ENCODE measurements at regions of chr17 and their contacts with region 1.

Region 1: GRCh38 chr17:67942810-67943209 is 53.5 kb downstream of the C17orf58 start:
- DNase-seq: peak; percentile 25 to 32
- ATAC-seq: peak; percentile 64 to 82; a peak in 5 of 6 replicates
- H3K4me3 ChIP-seq: no peak overlapping the region
- H3K27ac ChIP-seq: no peak overlapping the region
- H3K4me1 ChIP-seq: no peaks in the 10 kb centered on the region
- CTCF ChIP-seq: peak; percentile 49
- EP300 ChIP-seq: no peak
- POLR2A ChIP-seq: no peak
- RAD21 ChIP-seq: peak in 1 of 2 experiments; percentile 11; a peak in 1 of 5 replicates

Region 2: DNA sequence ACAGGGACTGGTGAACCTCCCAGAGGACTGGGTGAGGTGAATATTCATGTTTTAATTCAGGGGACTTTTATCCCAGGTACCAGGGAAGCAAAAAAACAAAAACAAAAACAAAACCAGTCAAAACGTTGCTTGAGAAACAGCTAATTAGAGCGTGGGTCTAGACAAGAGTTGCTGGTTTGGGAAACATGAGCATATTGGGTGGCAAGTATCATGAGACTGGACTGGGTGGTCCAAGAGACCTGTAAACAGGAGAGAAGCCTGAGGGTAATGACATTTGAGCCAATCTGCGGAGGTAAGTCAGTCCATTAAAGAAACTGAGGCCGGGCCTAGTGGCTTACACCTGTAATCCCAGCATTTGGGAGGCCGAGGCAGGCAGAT is 129.0 kb before region 1 on chr17:
- CTCF ChIA-PET with region 1: no interaction called
- POLR2A ChIA-PET with region 1: no interaction called
- DNase-seq: no peak
- ATAC-seq: no peak
- H3K4me3 ChIP-seq: no peak overlapping the region
- H3K27ac ChIP-seq: no peak overlapping the region; a peak in 1 of 6 replicates
- H3K4me1 ChIP-seq: no peaks in the 10 kb centered on the region
- CTCF ChIP-seq: no peak
- EP300 ChIP-seq: no peak
- POLR2A ChIP-seq: no peak
- RAD21 ChIP-seq: no peak

Region 3: GRCh38 chr17:67931233-67931632 is 11.6 kb before region 1 on chr17:
- CTCF ChIA-PET with region 1: interaction called, 23 read pairs
- POLR2A ChIA-PET with region 1: no interaction called
- DNase-seq: no peak
- ATAC-seq: no peak
- H3K4me3 ChIP-seq: no peak overlapping the region
- H3K27ac ChIP-seq: no peak overlapping the region
- H3K4me1 ChIP-seq: no peaks in the 10 kb centered on the region
- CTCF ChIP-seq: no peak
- EP300 ChIP-seq: no peak
- POLR2A ChIP-seq: no peak
- RAD21 ChIP-seq: no peak

Region 4: DNA sequence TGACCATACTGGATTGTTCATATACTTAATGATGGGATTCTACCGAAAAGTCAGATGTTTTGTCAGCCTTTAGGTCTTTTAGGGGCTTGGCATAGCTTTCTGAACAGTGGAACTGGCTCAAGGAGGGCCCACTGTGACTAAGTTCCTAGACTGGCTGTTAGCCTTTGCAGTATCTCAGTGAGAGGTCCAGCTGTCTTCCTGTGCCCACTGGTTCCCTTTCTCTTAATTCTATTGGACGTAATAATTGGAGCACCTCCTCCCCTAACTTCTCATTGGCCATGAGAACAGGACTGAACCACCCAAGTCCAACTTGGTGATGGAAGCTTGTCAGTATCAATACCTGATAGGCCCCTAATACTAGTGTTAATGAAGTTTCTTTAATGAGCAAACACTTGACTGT is 106.2 kb after region 1 on chr17:
- CTCF ChIA-PET with region 1: no interaction called
- POLR2A ChIA-PET with region 1: no interaction called
- DNase-seq: peak in 1 of 2 experiments; percentile 31
- ATAC-seq: peak; percentile 65 to 77; a peak in 5 of 6 replicates
- H3K4me3 ChIP-seq: no peak overlapping the region
- H3K27ac ChIP-seq: no peak overlapping the region
- H3K4me1 ChIP-seq: no peaks in the 10 kb centered on the region; the same call in 2 of the 3 replicates
- CTCF ChIP-seq: no peak
- EP300 ChIP-seq: no peak
- POLR2A ChIP-seq: no peak
- RAD21 ChIP-seq: no peak